ENCODE measurements at regions of chr15 and their contacts with region 1.

Region 1: GRCh38 chr15:87144775-87145174 is 1065.1 kb downstream of the AGBL1 start:
- DNase-seq: no peak
- ATAC-seq: no peak
- H3K4me3 ChIP-seq: no peak overlapping the region
- H3K4me3 Mint-ChIP-seq: no peak overlapping the region
- H3K27ac ChIP-seq: no peak overlapping the region
- H3K27ac Mint-ChIP-seq: no peak overlapping the region
- H3K4me1 ChIP-seq: no peaks in the 10 kb centered on the region
- H3K4me1 Mint-ChIP-seq: no peaks in the 10 kb centered on the region
- H3K27me3 ChIP-seq: no peaks in the 10 kb centered on the region
- H3K27me3 Mint-ChIP-seq: peaks cover 0 to 4% of the 10 kb centered on the region in 2 donors

Region 2: GRCh38 chr15:86247249-86247955 is 897.4 kb before region 1 on chr15:
- CTCF ChIA-PET with region 1: no interaction called
- POLR2A ChIA-PET with region 1: no interaction called
- DNase-seq: no peak
- ATAC-seq: no peak
- H3K4me3 ChIP-seq: no peak overlapping the region
- H3K4me3 Mint-ChIP-seq: no peak overlapping the region
- H3K27ac ChIP-seq: no peak overlapping the region
- H3K27ac Mint-ChIP-seq: no peak overlapping the region
- H3K4me1 ChIP-seq: no peaks in the 10 kb centered on the region
- H3K4me1 Mint-ChIP-seq: no peaks in the 10 kb centered on the region
- H3K27me3 ChIP-seq: peaks cover 0 to 4% of the 10 kb centered on the region in 2 experiments
- H3K27me3 Mint-ChIP-seq: peaks cover 1 to 5% of the 10 kb centered on the region in 2 donors

Region 3: DNA sequence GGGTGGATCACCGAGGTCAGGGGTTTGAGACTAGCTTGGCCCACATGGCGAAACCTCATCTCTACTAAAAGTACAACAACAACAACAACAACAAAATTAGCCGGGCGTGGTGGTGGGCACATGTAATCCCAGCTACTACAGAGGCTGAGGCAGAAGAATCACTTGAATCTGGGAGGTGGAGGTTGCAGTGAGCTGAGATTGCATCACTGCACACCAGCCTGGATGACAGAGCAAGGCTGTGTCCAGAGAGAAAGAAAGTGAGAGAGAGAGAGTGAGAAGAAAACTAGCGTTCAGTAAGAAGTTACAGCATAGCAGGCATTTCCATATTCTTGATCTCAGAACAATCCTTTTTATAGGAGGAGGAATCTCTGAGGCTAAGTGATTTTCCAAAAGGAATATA is 11.0 kb after region 1 on chr15:
- CTCF ChIA-PET with region 1: no interaction called
- POLR2A ChIA-PET with region 1: no interaction called
- DNase-seq: no peak
- ATAC-seq: no peak
- H3K4me3 ChIP-seq: no peak overlapping the region
- H3K4me3 Mint-ChIP-seq: no peak overlapping the region
- H3K27ac ChIP-seq: no peak overlapping the region
- H3K27ac Mint-ChIP-seq: no peak overlapping the region
- H3K4me1 ChIP-seq: no peaks in the 10 kb centered on the region
- H3K4me1 Mint-ChIP-seq: no peaks in the 10 kb centered on the region
- H3K27me3 ChIP-seq: no peaks in the 10 kb centered on the region
- H3K27me3 Mint-ChIP-seq: peaks cover 7% of the 10 kb centered on the region in 2 donors

Region 4: GRCh38 chr15:87489902-87490665 is 345.3 kb after region 1 on chr15:
- CTCF ChIA-PET with region 1: interaction called in 1 of 2 experiments, 12 read pairs
- POLR2A ChIA-PET with region 1: no interaction called
- DNase-seq: no peak
- ATAC-seq: no peak
- H3K4me3 ChIP-seq: no peak overlapping the region
- H3K4me3 Mint-ChIP-seq: no peak overlapping the region
- H3K27ac ChIP-seq: no peak overlapping the region
- H3K27ac Mint-ChIP-seq: no peak overlapping the region
- H3K4me1 ChIP-seq: no peaks in the 10 kb centered on the region
- H3K4me1 Mint-ChIP-seq: no peaks in the 10 kb centered on the region
- H3K27me3 ChIP-seq: no peaks in the 10 kb centered on the region
- H3K27me3 Mint-ChIP-seq: peaks cover 0 to 3% of the 10 kb centered on the region in 2 donors